Vagina (tissue), 2 donors: ENCODE measurements at regions of chr12 and their contacts with region 1.

Region 1: DNA sequence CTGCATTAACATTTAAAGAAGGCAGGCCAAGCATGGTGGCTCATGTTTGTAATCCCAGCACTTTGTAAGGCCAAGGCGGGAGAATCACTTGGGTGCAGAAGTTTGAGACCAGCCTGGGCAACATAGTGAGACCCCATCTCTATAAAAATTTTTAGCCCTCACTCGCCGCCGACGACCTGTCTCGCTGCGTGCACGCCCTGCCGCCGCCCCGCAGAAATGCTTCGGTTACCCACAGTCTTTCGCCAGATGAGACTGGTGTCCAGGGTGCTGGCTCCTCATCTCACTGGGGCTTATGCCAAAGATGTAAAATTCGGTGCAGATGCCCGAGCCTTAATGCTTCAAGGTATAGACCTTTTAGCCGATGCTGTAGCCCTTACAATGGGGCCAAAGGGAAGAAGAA is 10.8 kb upstream of the RBMS2 start:
- DNase-seq: no peak
- H3K4me3 ChIP-seq: no peak overlapping the region
- H3K27ac ChIP-seq: no peak overlapping the region
- H3K4me1 ChIP-seq: no peaks in the 10 kb centered on the region
- H3K27me3 ChIP-seq: no peaks in the 10 kb centered on the region
- CTCF ChIP-seq: no peak
- POLR2A ChIP-seq: no peak

Region 2: GRCh38 chr12:56571126-56571525 is 60.3 kb after region 1 on chr12:
- intact Hi-C with region 1: loop called (anchors 5 kb)
- DNase-seq: no peak
- H3K4me3 ChIP-seq: no peak overlapping the region
- H3K27ac ChIP-seq: peak overlapping the region; percentile 79
- H3K4me1 ChIP-seq: peaks cover 24% of the 10 kb centered on the region
- H3K27me3 ChIP-seq: no peaks in the 10 kb centered on the region
- CTCF ChIP-seq: no peak
- POLR2A ChIP-seq: no peak

Region 3: DNA sequence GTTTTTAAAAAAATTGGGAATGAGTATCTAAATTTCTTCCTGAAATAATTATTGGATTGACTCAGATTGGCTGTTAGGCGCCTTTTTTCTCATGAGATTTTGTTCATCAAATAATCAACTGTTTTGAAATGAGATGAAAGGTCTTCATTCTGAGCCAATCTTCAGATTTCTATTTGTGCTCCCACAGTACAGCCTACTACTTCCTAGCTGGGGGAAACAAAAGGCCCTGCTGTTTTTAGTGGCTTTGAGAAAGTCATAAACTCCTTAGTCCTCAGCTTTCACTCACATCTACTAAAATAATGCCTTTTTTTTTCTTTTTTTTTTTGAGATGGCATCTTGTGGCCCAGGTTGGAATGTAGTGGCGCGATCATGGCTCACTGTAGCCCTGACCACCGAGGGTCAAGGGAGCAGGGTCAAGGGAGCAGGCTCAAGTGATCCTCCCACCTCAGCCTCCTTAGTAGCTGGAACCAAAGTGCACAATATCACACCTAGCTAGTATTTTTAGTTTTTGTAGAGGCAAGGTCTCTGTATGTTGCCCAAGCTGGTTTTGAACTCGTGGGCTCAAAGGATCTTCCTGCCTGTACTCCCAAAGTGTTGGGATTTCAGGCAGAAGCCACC is 199.1 kb after region 1 on chr12:
- intact Hi-C with region 1: no loop called
- DNase-seq: no peak
- H3K4me3 ChIP-seq: no peak overlapping the region
- H3K27ac ChIP-seq: no peak overlapping the region
- H3K4me1 ChIP-seq: peaks cover 3% of the 10 kb centered on the region
- H3K27me3 ChIP-seq: no peaks in the 10 kb centered on the region
- CTCF ChIP-seq: no peak
- POLR2A ChIP-seq: no peak